ENCODE measurements at regions of chr12 and their contacts with region 1.

Region 1: GRCh38 chr12:3202734-3203446 is 125.7 kb downstream of the TSPAN9 start:
- DNase-seq: peak; percentile 36 to 93
- H3K4me3 ChIP-seq: no peak overlapping the region
- CTCF ChIP-seq: peak in 1 of 3 donors; percentile 43
- POLR2A ChIP-seq: no peak

Region 2: GRCh38 chr12:3073438-3074250 is 129.2 kb before region 1 on chr12:
- intact Hi-C with region 1: loop called (anchors 5 kb)
- DNase-seq: peak; percentile 83 to 98
- H3K4me3 ChIP-seq: no peak overlapping the region
- CTCF ChIP-seq: peak in 1 of 3 donors; percentile 82
- POLR2A ChIP-seq: no peak

Region 3: GRCh38 chr12:3135522-3136461 is 67.1 kb before region 1 on chr12:
- intact Hi-C with region 1: loop called (anchors 10 kb)
- DNase-seq: peak; percentile 37 to 85
- H3K4me3 ChIP-seq: no peak overlapping the region
- CTCF ChIP-seq: peak in 1 of 3 donors; percentile 49
- POLR2A ChIP-seq: no peak

Region 4: GRCh38 chr12:3527181-3527580 is 324.3 kb after region 1 on chr12:
- intact Hi-C with region 1: no loop called
- DNase-seq: no peak
- H3K4me3 ChIP-seq: no peak overlapping the region
- CTCF ChIP-seq: no peak
- POLR2A ChIP-seq: no peak

Measured in lower leg skin (tissue), 4 donors.